Heart left ventricle (tissue), 16 donors: ENCODE measurements at regions of chr3 and their contacts with region 1.

Region 1: GRCh38 chr3:178325330-178325729 is 210.9 kb upstream of the KCNMB2 start:
- DNase-seq: no peak
- ATAC-seq: no peak
- H3K4me3 ChIP-seq: no peak overlapping the region
- H3K27ac ChIP-seq: peak overlapping the region in 5 of 12 donors; percentile 14 to 41 (median 32)
- H3K4me1 ChIP-seq: peaks cover 0 to 32% (median 19%) of the 10 kb centered on the region in 12 donors
- H3K27me3 ChIP-seq: no peaks in the 10 kb centered on the region
- CTCF ChIP-seq: peak; percentile 18 to 66 (median 48)
- POLR2A ChIP-seq: no peak

Region 2: DNA sequence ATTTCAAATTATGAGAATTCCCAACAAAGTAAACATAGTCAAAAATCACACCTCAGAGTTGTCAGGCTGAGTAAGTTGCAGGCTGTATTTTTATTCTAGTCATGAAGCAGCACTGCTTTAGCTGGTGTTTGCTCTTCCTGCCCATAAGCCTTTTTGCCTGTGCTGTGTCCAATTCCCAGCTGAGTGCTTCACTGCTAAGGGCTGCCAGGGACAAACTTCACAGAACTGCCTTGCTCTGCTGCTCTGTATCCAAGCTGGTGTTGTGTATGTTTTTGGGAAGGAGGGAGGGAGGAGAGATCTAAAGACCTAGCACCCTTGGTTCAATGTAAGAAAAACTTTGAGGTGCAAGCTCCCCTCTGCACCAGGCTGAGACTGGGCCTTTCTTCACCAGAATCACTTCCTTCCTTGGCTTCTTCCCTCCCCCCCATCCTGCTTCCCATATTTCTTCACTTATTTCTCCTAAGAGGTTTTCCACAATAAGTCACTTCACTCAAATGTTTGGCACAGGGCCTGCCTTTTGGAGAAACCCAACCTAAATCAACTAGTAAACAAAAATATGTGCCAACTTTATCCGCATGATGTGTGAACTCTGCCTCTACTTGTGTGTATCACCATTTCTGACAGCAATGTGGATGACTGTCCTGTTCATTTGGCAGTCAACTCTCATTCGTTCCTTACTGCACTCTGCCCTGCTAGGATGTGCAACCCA is 1284.2 kb before region 1 on chr3:
- intact Hi-C with region 1: loop called in 5 of 10 experiments (anchors 5 to 10 kb)
- DNase-seq: peak in 3 of 5 donors; percentile 37 to 46 (median 38)
- ATAC-seq: peak; percentile 84 to 92 (median 90)
- H3K4me3 ChIP-seq: no peak overlapping the region
- H3K27ac ChIP-seq: peak overlapping the region in 11 of 12 donors; percentile 26 to 73 (median 54)
- H3K4me1 ChIP-seq: peaks cover 0 to 42% (median 29%) of the 10 kb centered on the region in 12 donors
- H3K27me3 ChIP-seq: no peaks in the 10 kb centered on the region
- CTCF ChIP-seq: no peak
- POLR2A ChIP-seq: no peak

Region 3: GRCh38 chr3:177057768-177058167 is 1267.6 kb before region 1 on chr3:
- intact Hi-C with region 1: loop called in 3 of 10 experiments (anchors 5 to 10 kb)
- DNase-seq: no peak
- ATAC-seq: no peak
- H3K4me3 ChIP-seq: no peak overlapping the region
- H3K27ac ChIP-seq: no peak overlapping the region
- H3K4me1 ChIP-seq: peaks cover 0 to 68% (median 39%) of the 10 kb centered on the region in 12 donors
- H3K27me3 ChIP-seq: no peaks in the 10 kb centered on the region
- CTCF ChIP-seq: no peak
- POLR2A ChIP-seq: no peak

Region 4: DNA sequence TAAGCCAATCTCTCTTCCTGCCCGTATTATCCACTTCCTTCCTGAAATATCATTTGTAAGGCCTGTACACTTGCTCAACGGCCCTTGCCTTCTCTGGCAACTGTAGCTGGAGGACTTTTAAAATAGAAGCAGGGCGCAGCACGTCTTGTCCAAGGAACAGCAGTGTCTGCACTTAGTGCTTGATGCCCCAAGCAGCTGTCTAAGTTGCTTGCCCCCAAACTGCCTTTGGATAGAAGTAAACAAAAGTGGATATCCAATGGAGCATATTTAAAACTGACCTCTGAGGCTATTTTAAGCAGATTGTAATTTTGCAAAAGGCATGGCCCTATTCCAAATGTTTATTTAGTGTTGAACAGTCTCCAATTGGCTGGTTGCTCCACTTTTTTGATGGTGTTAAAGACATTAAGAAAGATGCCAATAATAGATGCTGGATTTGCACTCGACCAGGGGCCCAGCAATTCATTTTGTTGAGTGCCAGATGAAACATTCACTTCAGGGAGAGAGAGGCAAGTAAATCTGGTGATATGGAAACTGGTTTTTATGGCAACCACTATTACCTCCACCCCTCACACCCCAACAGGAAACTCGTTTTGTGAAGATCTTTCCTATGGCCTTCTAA is 601.2 kb before region 1 on chr3:
- intact Hi-C with region 1: loop called in 1 of 10 experiments (anchors 10 kb)
- DNase-seq: peak; percentile 66 to 91 (median 72)
- ATAC-seq: peak; percentile 91 to 98 (median 96)
- H3K4me3 ChIP-seq: no peak overlapping the region
- H3K27ac ChIP-seq: peak overlapping the region; percentile 28 to 80 (median 72)
- H3K4me1 ChIP-seq: peaks cover 0 to 54% (median 30%) of the 10 kb centered on the region in 12 donors
- H3K27me3 ChIP-seq: no peaks in the 10 kb centered on the region
- CTCF ChIP-seq: no peak
- POLR2A ChIP-seq: no peak

Region 5: GRCh38 chr3:177816667-177817208 is 508.6 kb before region 1 on chr3:
- intact Hi-C with region 1: loop called in 2 of 10 experiments (anchors 10 kb)
- DNase-seq: peak in 1 of 5 donors; percentile 23
- ATAC-seq: peak; percentile 47 to 72 (median 61)
- H3K4me3 ChIP-seq: no peak overlapping the region
- H3K27ac ChIP-seq: peak overlapping the region in 10 of 12 donors; percentile 6 to 63 (median 52)
- H3K4me1 ChIP-seq: peaks cover 5 to 52% (median 28%) of the 10 kb centered on the region in 12 donors
- H3K27me3 ChIP-seq: no peaks in the 10 kb centered on the region
- CTCF ChIP-seq: peak in 6 of 12 donors; percentile 13 to 49 (median 36)
- POLR2A ChIP-seq: no peak

Region 6: DNA sequence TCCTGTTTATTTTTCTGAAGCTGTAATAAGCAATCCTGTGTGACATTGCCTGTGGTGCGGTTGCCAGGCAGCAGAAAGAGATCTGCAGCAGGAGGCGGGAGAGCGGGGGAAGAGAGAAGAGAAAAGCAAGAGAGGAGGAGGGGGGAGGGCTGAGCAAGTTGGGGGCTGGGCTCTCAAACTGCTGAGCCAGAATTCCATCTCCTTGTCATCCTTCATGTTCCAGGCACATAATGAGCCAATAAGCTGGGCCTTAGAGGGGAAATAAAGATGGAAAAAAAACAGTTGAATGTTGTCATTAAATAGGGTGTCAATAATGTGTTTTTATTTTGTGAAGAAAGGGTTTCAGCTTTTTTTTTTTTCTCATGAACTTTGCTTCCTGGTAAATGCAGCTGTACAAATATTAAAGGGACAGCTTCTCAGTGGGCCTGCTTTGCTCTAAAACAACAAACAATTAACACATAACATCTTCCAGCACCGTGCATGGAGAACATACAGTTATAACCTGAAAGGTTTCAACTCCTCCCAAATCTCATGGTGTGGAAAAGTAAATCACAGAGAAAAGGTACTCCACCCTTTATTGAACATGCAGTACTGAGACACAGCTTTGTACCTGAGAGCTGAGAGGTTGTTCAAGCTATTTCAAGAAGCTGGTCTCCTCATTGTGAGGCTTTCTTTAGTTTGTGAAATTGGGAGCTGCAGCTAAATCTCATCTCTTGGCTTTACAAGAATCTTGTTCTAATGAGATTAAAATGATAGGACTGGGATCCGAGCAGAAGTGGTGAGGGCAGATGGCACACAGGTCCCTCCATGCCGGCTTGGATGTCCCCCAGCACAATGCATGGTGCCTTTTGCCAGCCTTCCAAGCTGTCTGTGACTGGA is 240.2 kb before region 1 on chr3:
- intact Hi-C with region 1: loop called in 1 of 10 experiments (anchors 5 kb)
- DNase-seq: peak; percentile 84 to 91 (median 86)
- ATAC-seq: peak; percentile 92 to 98 (median 95)
- H3K4me3 ChIP-seq: no peak overlapping the region
- H3K27ac ChIP-seq: peak overlapping the region in 11 of 12 donors; percentile 39 to 90 (median 77)
- H3K4me1 ChIP-seq: peaks cover 7 to 49% (median 34%) of the 10 kb centered on the region in 12 donors
- H3K27me3 ChIP-seq: no peaks in the 10 kb centered on the region
- CTCF ChIP-seq: no peak
- POLR2A ChIP-seq: no peak

Region 7: GRCh38 chr3:178203165-178203564 is 122.2 kb before region 1 on chr3:
- intact Hi-C with region 1: no loop called
- DNase-seq: peak in 1 of 5 donors; percentile 16
- ATAC-seq: peak in 3 of 4 donors; percentile 70 to 88 (median 73)
- H3K4me3 ChIP-seq: no peak overlapping the region
- H3K27ac ChIP-seq: peak overlapping the region in 5 of 12 donors; percentile 6 to 65 (median 47)
- H3K4me1 ChIP-seq: peaks cover 0 to 25% (median 9%) of the 10 kb centered on the region in 12 donors
- H3K27me3 ChIP-seq: no peaks in the 10 kb centered on the region
- CTCF ChIP-seq: no peak
- POLR2A ChIP-seq: no peak

Region 8: DNA sequence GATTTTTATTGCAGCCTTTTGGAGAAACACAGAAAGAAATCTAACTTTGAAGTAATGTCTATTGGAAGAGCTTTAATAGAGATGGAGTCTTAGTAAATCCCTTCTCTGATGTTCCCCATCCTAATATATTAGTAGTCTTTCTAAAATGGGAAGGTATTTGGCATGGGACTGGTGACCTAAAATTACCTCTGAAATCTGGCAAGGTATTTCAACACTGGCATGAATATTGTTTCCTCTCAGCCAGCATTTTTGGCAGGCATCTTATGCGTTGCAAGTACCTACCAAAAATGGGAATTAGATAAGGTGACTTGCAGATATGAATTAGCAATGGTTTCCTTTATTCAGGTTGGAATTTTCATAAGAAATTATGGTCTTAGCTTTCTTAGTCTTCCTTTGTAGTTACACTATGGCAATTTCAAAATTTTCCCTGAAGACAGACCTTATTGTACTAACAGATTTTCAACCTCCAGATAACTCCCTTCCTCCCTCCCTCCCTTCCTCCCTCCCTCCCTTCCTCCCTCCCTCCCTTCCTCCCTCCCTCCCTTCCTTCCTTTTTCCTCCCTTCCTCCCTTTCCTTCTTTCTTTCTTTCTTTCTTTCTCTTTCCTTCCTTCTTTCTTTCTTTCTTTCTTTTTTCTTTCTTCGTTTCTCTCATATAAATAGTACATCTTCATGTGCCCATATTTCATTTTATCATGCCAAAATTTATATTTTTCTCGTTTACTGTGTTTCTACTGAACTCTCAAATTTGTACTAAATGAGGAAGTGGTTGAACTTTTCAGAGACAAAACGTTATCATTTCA is 42.7 kb after region 1 on chr3:
- intact Hi-C with region 1: loop called in 1 of 10 experiments (anchors 5 kb)
- DNase-seq: peak in 3 of 5 donors; percentile 33 to 49 (median 38)
- ATAC-seq: peak; percentile 94 to 98 (median 95)
- H3K4me3 ChIP-seq: no peak overlapping the region
- H3K27ac ChIP-seq: peak overlapping the region in 11 of 12 donors; percentile 11 to 81 (median 66)
- H3K4me1 ChIP-seq: peaks cover 0 to 11% (median 3%) of the 10 kb centered on the region in 12 donors
- H3K27me3 ChIP-seq: no peaks in the 10 kb centered on the region
- CTCF ChIP-seq: no peak
- POLR2A ChIP-seq: no peak

Region 9: DNA sequence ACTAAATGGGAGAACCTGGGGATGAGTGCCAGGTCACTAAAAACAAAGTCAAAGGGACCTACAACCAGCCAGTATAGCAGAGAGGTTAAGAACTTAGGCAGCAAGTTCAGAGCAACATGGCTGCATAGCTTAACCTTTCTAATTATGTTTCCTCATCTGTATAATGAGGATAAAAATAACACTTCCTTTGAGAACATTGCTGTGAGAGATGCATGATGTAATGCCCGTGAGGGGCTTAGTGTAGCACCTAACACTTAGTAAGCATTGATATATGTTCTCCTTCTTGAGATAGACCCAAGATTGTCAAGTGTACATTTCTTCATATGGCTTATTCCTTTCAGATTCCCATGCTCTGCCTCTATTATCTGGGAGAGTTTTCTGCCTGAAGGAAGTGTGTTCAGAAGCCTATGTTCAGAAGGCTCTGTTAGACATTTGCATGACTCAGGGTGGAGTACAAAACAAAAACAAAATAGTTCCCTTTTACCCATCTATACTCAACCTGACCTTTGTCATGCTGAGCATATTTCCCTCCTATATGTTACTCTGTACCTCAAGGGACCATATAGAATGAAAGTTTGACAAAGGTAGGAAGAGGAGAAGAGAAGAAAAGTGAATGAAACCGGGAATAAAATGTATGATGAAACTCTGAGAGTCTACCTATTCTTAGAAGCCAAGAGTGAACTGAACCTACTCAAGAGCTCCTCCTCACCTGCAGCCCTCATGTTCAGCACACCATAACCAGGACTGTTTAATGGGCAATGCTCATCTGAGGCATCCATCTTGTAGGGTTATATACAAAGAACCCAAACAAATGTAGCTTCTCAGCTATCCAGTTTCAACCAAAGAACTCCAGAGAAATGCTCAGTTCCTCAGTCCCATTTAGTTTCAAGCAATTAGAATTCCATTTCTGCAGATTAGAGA is 140.2 kb after region 1 on chr3:
- intact Hi-C with region 1: no loop called
- DNase-seq: no peak
- ATAC-seq: no peak
- H3K4me3 ChIP-seq: no peak overlapping the region
- H3K27ac ChIP-seq: no peak overlapping the region
- H3K4me1 ChIP-seq: no peaks in the 10 kb centered on the region
- H3K27me3 ChIP-seq: no peaks in the 10 kb centered on the region
- CTCF ChIP-seq: no peak
- POLR2A ChIP-seq: no peak